ENCODE measurements at regions of chr6 and their contacts with region 1.

Region 1: GRCh38 chr6:67802771-67803170 is 832.3 kb upstream of the ADGRB3 start:
- DNase-seq: no peak
- H3K4me3 Mint-ChIP-seq: no peak overlapping the region
- H3K27ac Mint-ChIP-seq: no peak overlapping the region
- H3K4me1 Mint-ChIP-seq: no peaks in the 10 kb centered on the region
- H3K27me3 Mint-ChIP-seq: no peaks in the 10 kb centered on the region

Region 2: DNA sequence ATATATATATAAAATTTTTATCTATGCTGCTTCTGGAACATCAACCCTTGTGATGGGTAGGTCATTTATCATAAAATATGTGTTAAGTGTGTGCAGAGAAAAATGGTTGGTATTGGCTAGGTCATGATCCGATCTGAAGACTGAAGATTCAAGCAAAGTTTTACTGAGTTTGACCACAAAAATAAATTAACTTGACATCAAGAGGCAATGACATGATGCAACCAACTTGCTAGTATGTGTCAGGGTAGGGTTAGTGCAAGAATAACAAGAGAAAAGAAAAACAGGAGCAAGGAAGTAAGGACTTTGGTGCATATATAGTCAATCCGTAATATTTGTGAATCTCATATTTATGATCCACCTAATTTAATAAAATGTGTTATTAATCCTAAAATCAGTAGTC is 369.6 kb before region 1 on chr6:
- intact Hi-C with region 1: loop called (anchors 5 kb)
- DNase-seq: no peak
- H3K4me3 Mint-ChIP-seq: no peak overlapping the region
- H3K27ac Mint-ChIP-seq: no peak overlapping the region
- H3K4me1 Mint-ChIP-seq: no peaks in the 10 kb centered on the region
- H3K27me3 Mint-ChIP-seq: no peaks in the 10 kb centered on the region

Region 3: GRCh38 chr6:67541586-67541985 is 261.2 kb before region 1 on chr6:
- intact Hi-C with region 1: no loop called
- DNase-seq: no peak
- H3K4me3 Mint-ChIP-seq: no peak overlapping the region
- H3K27ac Mint-ChIP-seq: no peak overlapping the region
- H3K4me1 Mint-ChIP-seq: no peaks in the 10 kb centered on the region
- H3K27me3 Mint-ChIP-seq: no peaks in the 10 kb centered on the region